HAP-1 (cell line): ENCODE measurements at regions of chr9 and their contacts with region 1.

Region 1: DNA sequence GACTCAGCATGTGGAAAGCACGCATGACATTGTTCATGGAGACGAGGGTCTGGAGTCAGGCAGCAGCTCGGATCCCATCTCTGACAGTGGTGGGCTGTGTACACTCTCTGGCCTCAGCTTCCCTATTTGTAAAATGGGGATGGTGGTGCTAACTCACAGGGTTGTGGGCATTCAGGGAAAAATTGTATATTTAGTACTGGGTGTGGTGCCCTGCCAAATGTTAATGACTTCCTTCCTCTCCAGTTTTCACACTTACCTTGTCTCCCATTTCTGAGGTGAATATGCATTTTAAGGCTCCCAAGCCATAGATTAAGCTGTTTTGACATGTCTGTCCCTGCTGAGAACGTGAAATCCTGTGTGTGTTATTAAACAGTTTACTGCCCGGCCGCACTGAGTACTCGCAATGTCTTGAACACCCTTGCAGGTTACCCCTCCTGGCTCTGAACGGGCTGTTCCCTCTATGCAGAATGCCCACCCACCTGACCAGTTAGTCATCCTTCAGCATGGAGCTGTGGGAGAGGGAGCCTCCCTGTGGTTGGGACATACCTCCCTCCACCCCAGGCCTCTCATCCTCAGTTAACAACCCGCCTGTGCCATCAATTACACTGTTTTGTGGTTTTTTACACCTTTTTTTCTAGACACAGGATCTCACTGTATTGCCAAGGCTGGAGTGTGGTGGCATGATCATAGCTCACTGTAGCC is 25.8 kb downstream of the TJP2 start:
- DNase-seq: no peak
- H3K4me3 ChIP-seq: no peak overlapping the region
- H3K4me1 ChIP-seq: no peaks in the 10 kb centered on the region
- H3K27me3 ChIP-seq: no peaks in the 10 kb centered on the region

Region 2: DNA sequence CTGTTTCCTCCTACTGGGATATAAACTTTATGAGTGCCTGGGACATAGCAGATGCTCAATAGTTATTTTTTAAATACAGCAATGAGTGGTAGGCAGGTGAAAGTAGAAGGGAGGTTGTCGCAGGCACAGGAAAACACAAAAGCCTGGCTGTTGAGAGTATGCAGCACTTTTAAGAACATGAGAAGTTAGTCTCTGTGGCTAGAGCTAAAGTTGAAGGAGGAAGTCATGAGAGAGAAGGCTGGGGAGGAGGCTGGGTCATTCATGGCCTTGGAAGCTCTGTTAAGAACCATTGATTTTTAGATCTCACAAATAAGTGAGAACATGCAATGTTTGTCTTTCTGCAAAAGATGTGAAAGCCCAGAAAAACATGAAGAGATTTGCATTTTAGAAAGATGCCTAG is 312.7 kb before region 1 on chr9:
- in situ Hi-C with region 1: loop called (anchors 10 kb)
- DNase-seq: no peak
- H3K4me3 ChIP-seq: no peak overlapping the region
- H3K4me1 ChIP-seq: no peaks in the 10 kb centered on the region
- H3K27me3 ChIP-seq: peaks cover 7% of the 10 kb centered on the region

Region 3: DNA sequence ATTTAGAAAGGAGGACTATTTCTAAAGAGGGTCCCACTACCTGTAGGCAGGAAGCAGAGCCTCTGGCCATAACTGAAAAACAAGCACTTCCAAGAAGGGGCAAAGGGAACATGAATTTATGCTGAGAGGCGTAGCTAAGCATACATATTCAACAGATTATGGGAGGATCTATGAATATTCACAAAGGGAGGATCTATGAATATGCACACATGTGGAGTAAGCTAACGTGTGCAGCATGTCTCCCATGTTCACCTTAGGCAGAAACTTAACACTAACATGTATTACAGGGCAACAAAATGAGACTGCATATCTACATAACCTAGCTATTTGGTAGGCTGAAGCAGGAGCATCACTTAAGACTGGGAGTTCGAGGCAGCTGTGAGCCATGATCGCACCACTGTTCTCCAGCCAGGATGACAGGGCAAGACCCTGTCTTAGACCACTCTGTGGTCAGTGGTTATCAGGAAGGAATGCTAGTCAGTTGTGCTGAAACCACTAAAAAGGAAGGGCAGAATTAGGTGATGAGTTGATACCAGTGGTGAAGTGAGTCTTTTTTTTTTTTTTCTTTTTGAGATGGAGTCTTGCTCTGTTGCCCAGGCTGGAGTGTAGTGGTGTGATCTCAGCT is 143.6 kb before region 1 on chr9:
- in situ Hi-C with region 1: loop called (anchors 5 kb)
- DNase-seq: no peak
- H3K4me3 ChIP-seq: no peak overlapping the region
- H3K4me1 ChIP-seq: no peaks in the 10 kb centered on the region; the same call in 1 of the 2 replicates
- H3K27me3 ChIP-seq: no peaks in the 10 kb centered on the region